GM12878 (cell line): ENCODE measurements at regions of chr3 and their contacts with region 1.

Region 1: GRCh38 chr3:156382458-156383346 is 172.2 kb downstream of the SSR3 start:
- DNase-seq: no peak
- ATAC-seq: peak; percentile 93
- H3K4me3 ChIP-seq: no peak overlapping the region
- H3K27ac ChIP-seq: no peak overlapping the region
- H3K4me1 ChIP-seq: no peaks in the 10 kb centered on the region
- H3K27me3 ChIP-seq: peaks cover 0 to 2% of the 10 kb centered on the region in 2 experiments; a peak in 2 of 4 replicates
- CTCF ChIP-seq: peak; percentile 72 to 81 (median 80)
- EP300 ChIP-seq: no peak
- POLR2A ChIP-seq: no peak
- RAD21 ChIP-seq: peak; percentile 83

Region 2: DNA sequence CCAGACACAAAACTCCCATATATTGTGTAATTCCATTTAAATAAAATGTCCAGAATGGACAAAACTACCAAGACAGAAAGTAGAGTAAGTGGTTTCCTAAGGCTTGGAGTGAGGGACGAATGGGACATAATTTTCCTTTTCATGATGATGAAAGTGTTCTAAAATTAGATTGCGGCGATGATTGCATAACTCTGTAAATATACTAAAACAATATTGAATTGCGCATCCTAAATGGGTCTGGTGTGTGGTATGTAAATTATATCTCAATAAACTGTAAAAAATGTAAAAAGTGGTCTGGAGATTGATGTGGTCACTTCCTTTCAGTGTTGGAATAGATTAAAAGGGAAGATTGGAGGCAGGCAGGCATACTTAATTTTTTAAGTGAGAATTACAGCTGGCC is 368.2 kb before region 1 on chr3:
- CTCF ChIA-PET with region 1: interaction called, 10 read pairs
- POLR2A ChIA-PET with region 1: no interaction called
- RAD21 ChIA-PET with region 1: no interaction called
- SMC1A ChIA-PET with region 1: interaction called, 3 read pairs
- in situ Hi-C with region 1: no loop called
- intact Hi-C with region 1: no loop called
- DNase-seq: no peak
- ATAC-seq: no peak
- H3K4me3 ChIP-seq: no peak overlapping the region
- H3K27ac ChIP-seq: no peak overlapping the region
- H3K4me1 ChIP-seq: no peaks in the 10 kb centered on the region
- H3K27me3 ChIP-seq: no peaks in the 10 kb centered on the region
- CTCF ChIP-seq: no peak
- EP300 ChIP-seq: no peak
- POLR2A ChIP-seq: no peak
- RAD21 ChIP-seq: no peak

Region 3: DNA sequence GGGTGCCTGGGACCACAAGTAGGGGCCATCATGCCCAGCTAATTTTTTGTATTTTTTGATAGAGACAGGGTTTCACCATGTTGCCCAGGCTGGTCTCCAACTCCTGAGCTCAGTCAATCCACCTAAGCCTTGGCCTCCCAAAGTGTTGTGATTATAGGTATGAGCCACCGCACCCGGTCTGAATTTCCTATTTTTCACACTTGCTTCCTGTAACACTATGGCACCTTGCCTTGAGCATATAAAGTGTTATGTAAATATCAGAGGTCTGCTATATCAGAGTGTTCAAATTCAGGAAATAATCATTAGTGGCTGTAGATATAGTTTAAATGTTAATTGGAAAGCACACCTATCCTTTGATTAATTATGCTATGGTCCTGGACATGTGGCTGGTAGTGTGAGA is 97.1 kb before region 1 on chr3:
- CTCF ChIA-PET with region 1: no interaction called
- POLR2A ChIA-PET with region 1: no interaction called
- RAD21 ChIA-PET with region 1: no interaction called
- SMC1A ChIA-PET with region 1: no interaction called
- in situ Hi-C with region 1: no loop called
- intact Hi-C with region 1: no loop called
- DNase-seq: no peak
- ATAC-seq: no peak
- H3K4me3 ChIP-seq: no peak overlapping the region
- H3K27ac ChIP-seq: no peak overlapping the region
- H3K4me1 ChIP-seq: no peaks in the 10 kb centered on the region
- H3K27me3 ChIP-seq: peaks cover 3 to 4% of the 10 kb centered on the region in 2 experiments
- CTCF ChIP-seq: no peak
- EP300 ChIP-seq: no peak
- POLR2A ChIP-seq: no peak
- RAD21 ChIP-seq: no peak

Region 4: GRCh38 chr3:156341831-156342416 is 40.8 kb before region 1 on chr3:
- CTCF ChIA-PET with region 1: interaction called, 11 read pairs
- POLR2A ChIA-PET with region 1: no interaction called
- RAD21 ChIA-PET with region 1: interaction called, 7 read pairs
- SMC1A ChIA-PET with region 1: interaction called, 16 read pairs
- in situ Hi-C with region 1: no loop called
- intact Hi-C with region 1: no loop called
- DNase-seq: peak; percentile 30
- ATAC-seq: peak; percentile 99
- H3K4me3 ChIP-seq: no peak overlapping the region
- H3K27ac ChIP-seq: no peak overlapping the region
- H3K4me1 ChIP-seq: peaks cover 6% of the 10 kb centered on the region
- H3K27me3 ChIP-seq: no peaks in the 10 kb centered on the region; a peak in 1 of 4 replicates
- CTCF ChIP-seq: peak; percentile 42 to 53 (median 44); a peak in 5 of 6 replicates
- EP300 ChIP-seq: peak; percentile 74 to 89
- POLR2A ChIP-seq: no peak
- RAD21 ChIP-seq: peak; percentile 48; the same call in 1 of the 2 replicates

Region 5: GRCh38 chr3:156396851-156397250 is 14.1 kb after region 1 on chr3:
- CTCF ChIA-PET with region 1: interaction called, 34 read pairs
- POLR2A ChIA-PET with region 1: no interaction called
- RAD21 ChIA-PET with region 1: interaction called, 3 read pairs
- SMC1A ChIA-PET with region 1: interaction called, 7 read pairs
- in situ Hi-C with region 1: no loop called
- intact Hi-C with region 1: no loop called
- DNase-seq: no peak
- ATAC-seq: no peak
- H3K4me3 ChIP-seq: no peak overlapping the region
- H3K27ac ChIP-seq: no peak overlapping the region
- H3K4me1 ChIP-seq: no peaks in the 10 kb centered on the region
- H3K27me3 ChIP-seq: no peaks in the 10 kb centered on the region; a peak in 3 of 4 replicates
- CTCF ChIP-seq: no peak
- EP300 ChIP-seq: no peak
- POLR2A ChIP-seq: no peak
- RAD21 ChIP-seq: no peak

Region 6: DNA sequence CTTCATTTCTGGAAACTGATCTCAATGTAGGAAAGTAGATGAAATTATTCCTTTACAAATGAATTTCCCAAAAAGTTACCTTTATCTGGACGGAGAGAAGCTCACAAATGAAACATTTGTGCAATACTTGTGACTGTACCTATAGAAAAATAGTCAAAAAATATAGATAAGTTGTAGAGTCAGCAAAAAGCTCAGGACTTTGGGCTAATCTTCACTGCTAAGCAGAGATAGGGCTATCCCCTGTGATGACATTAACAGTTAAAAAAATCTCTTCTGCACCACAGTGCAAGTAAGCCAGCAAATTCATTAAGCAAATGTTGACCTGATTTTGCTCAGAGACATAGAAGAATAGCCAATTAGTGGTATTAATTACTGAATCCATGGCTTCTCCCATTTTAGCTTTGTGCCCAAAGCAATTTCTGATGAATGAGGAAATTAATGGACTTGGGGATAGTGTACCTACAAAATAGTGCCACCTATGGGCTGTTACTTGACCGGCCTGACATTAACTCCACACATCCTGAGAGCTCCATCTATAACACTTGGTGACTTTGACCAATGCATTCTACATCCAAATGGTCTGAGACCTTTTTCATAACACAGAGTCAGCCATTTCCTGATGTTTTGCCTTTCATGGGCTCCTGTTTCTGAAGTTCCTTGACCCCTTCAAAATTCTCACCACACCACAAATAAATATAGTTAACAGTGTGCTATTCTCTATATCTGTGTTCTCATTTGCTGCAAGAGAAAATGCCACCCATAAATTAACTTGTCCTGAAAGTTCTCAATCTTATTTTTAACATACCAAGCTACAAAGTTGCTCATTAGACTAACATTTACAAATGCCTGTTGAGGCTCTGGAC is 67.2 kb after region 1 on chr3:
- CTCF ChIA-PET with region 1: interaction called, 17 read pairs
- POLR2A ChIA-PET with region 1: no interaction called
- RAD21 ChIA-PET with region 1: no interaction called
- SMC1A ChIA-PET with region 1: interaction called, 3 read pairs
- in situ Hi-C with region 1: no loop called
- intact Hi-C with region 1: no loop called
- DNase-seq: no peak
- ATAC-seq: peak; percentile 86
- H3K4me3 ChIP-seq: no peak overlapping the region
- H3K27ac ChIP-seq: no peak overlapping the region
- H3K4me1 ChIP-seq: no peaks in the 10 kb centered on the region
- H3K27me3 ChIP-seq: no peaks in the 10 kb centered on the region; a peak in 1 of 4 replicates
- CTCF ChIP-seq: peak; percentile 54 to 65 (median 65)
- EP300 ChIP-seq: no peak
- POLR2A ChIP-seq: no peak
- RAD21 ChIP-seq: peak; percentile 41